ENCODE measurements at regions of chr1 and their contacts with region 1.

Region 1: GRCh38 chr1:84077476-84078107 is 66.5 kb upstream of the PRKACB start:
- DNase-seq: peak; percentile 71 to 90 (median 78)
- H3K4me3 ChIP-seq: peak overlapping the region; percentile 70 to 96 (median 88)
- H3K27ac ChIP-seq: peak overlapping the region; percentile 68 to 99 (median 95)
- H3K27me3 ChIP-seq: no peaks in the 10 kb centered on the region
- CTCF ChIP-seq: peak in 30 of 56 donors; percentile 6 to 50 (median 28)

Region 2: GRCh38 chr1:83910461-83910860 is 167.1 kb before region 1 on chr1:
- intact Hi-C with region 1: loop called in 1 of 2 experiments (anchors 5 kb)
- DNase-seq: no peak
- H3K4me3 ChIP-seq: peak overlapping the region in 8 of 59 donors; percentile 10 to 19 (median 12)
- H3K27ac ChIP-seq: peak overlapping the region in 55 of 59 donors; percentile 0 to 83 (median 59)
- H3K27me3 ChIP-seq: no peaks in the 10 kb centered on the region
- CTCF ChIP-seq: no peak